ENCODE measurements at regions of chr12 and their contacts with region 1.

Region 1: DNA sequence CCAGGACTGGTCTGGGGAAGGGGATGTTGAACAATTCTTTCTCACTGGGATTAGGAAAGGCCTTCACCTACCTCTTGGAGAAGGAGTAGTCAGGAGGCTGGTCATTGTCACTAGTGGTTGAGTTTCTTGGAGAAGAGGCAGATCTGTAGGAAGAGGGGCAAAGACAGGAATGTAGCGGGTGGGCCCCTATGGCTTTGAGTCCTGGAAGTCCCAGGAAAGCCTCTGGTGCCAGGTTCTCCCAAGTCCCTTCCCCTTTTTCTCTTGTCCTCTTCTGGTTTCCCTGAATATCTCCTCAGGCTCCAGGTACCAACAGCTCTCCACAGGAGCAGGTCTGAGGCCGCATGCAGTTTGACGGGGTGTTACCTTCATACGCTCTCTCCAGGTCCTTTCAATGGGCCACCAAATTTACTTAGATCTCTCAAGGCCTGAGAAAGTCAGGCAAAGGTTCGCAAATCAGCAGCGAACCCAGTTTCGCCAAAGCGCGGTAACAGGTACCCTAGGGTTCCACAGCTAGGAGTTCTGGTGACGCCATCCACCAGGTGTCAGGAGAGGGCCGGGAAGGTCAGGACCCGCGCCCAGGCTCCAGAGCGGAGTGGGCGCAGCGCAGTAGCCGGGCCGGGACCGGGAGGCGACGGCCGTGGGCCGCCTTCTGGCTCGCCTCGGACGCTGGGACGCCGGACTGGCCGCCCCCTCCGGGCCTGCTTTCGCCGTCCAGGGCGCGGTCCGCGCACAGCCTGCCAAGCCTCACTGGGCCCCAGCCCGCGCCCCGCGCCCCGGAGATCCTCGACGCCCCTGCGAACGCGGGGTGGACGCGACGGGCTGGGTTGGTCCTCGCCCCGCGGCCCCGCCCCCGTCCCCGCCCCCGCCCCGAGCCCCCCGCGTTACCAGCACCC is 795 bp downstream of the SMAGP start:
- DNase-seq: peak in 2 of 10 donors; percentile 6 to 17

Region 2: DNA sequence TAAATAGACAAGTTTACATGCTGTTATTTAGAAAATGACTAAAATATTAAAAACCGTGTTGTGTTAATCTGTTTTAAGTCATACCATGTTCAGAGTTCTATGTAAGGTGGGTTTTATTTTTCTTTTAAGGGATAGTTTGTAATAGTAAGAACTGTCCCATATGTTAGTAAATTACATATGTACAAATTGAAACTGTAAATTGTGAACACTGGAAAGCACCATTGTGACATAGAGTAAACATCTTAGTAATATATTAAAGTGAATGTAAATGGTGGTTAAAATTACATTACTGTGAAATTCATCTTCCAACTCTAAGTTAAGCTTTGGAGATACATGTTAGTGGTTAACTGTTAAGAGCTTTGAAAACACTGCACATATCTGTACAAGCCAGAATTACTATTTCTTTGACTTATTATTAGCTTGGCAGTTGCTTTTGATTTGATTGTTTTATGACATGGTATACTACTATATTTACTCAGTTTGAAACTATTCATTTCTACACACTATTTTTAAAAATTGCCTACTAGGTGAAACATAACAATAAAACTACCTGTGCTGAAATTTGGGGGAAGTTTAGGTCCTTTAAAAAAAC is 792.1 kb before region 1 on chr12:
- intact Hi-C with region 1: loop called (anchors 10 kb)
- DNase-seq: no peak

Region 3: DNA sequence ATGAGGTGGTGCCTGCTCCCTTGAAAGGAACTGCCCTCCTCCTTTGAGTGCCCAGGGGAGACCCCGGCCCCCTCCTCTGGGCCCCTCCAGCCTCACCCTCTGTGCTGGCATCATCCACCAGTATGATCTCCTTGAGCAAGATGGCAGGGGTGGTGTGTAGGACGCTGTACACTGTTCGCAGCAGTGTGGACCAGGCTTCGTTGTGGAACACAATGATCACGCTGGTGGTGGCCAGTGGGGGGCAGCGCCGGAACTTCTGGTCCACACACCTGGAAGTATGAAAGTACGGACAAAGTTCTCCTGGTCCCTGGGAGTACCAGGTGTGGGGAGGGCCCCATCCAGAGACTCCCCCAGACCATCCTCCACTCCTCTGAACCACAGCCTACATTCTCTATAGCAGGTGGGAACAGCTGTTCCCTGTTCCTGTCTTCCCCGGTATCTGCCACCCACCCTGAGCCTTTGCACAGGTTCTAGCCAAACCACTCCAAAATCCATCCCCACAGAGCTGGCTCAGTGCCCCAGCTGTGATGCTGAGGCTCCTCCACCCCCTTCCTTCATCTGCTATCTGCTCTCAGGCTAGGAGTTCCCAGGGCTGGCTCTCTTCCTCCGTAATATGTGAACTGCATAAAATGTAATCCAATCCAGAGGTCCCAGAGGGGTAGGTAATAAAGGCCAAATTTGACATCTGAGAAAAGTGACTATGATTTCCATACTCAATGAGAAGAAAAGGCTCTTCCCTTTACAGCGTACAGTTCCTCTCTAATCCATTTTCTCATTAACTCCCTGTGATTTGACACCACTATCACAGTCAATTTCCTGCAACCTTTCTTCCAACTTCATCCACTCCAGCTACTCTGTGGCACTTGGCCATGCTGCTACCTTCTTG is 107.9 kb after region 1 on chr12:
- intact Hi-C with region 1: no loop called
- DNase-seq: peak in 8 of 10 donors; percentile 58 to 94 (median 74)